ENCODE measurements at regions of chr1 and their contacts with region 1.

Region 1: DNA sequence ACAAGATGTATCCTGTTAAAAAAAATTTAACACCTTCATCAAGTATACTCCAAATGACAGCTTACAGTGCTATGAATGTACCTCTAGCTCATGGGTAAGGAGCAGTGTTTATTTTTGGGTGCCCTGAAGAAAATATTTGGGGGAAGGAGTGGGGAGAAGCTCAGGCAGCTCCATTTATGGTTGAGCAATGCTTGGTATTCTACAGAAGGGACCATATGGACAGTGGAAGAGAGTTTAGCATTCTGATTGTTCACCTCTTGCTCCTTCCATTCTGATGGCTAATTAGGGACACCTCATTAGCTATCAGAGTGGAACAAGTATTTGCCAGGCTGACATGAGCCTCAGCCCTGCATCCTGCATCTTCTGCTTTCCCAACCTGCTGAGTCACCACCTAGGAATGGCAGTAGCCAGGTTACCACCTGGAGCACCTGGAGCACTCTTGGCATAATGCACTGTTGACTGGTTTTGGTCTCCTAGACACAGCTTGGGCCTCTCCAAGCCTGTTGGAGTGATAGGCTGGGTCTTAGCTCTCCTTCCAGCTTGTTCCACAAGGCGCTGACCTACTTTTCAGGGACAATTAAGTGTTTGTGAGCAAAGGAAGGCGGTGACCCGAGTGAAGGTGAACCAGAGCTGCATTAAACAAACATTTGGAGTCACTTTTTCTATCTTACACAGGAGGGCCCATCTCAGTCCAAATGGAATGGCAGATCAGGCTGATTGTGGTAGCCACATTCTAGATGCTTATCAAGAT is 61.9 kb upstream of the MACF1 start:
- DNase-seq: no peak
- H3K4me3 ChIP-seq: no peak overlapping the region
- H3K27ac ChIP-seq: peak overlapping the region; percentile 87
- H3K27me3 ChIP-seq: no peaks in the 10 kb centered on the region
- CTCF ChIP-seq: no peak

Region 2: GRCh38 chr1:38783640-38784229 is 358.8 kb before region 1 on chr1:
- CTCF ChIA-PET with region 1: no interaction called
- POLR2A ChIA-PET with region 1: no interaction called
- DNase-seq: no peak
- H3K4me3 ChIP-seq: no peak overlapping the region
- H3K27ac ChIP-seq: no peak overlapping the region
- H3K27me3 ChIP-seq: peaks cover 17% of the 10 kb centered on the region
- CTCF ChIP-seq: no peak

Region 3: DNA sequence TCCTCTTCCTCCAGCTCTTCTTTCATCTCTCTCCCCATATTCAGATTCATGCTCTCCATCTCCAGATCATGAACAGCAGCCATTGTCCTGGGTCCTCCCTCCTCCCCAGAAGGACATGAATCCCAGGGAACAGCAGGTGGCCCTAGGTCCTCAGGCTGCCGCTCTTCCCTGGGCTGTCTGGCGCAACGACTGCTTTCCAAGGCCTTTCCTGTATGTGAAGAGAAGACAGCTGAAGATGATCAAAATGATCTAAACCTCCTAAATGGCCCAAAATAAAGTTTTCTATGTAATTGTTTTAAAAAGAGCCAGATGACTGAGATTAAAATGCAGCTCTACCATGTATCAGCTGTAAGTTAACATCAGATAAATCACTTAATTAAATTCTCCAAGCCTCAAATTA is 223.4 kb before region 1 on chr1:
- CTCF ChIA-PET with region 1: no interaction called
- POLR2A ChIA-PET with region 1: no interaction called
- DNase-seq: no peak
- H3K4me3 ChIP-seq: no peak overlapping the region
- H3K27ac ChIP-seq: no peak overlapping the region
- H3K27me3 ChIP-seq: no peaks in the 10 kb centered on the region
- CTCF ChIP-seq: no peak

Region 4: GRCh38 chr1:39034114-39034654 is 108.4 kb before region 1 on chr1:
- CTCF ChIA-PET with region 1: no interaction called
- POLR2A ChIA-PET with region 1: no interaction called
- DNase-seq: no peak
- H3K4me3 ChIP-seq: no peak overlapping the region
- H3K27ac ChIP-seq: no peak overlapping the region
- H3K27me3 ChIP-seq: no peaks in the 10 kb centered on the region
- CTCF ChIP-seq: no peak

Region 5: GRCh38 chr1:39105061-39105840 is 37.3 kb before region 1 on chr1:
- CTCF ChIA-PET with region 1: interaction called, 4 read pairs
- POLR2A ChIA-PET with region 1: interaction called, 15 read pairs
- DNase-seq: no peak
- H3K4me3 ChIP-seq: peak overlapping the region; percentile 84
- H3K27ac ChIP-seq: peak overlapping the region; percentile 84
- H3K27me3 ChIP-seq: no peaks in the 10 kb centered on the region
- CTCF ChIP-seq: no peak

Region 6: DNA sequence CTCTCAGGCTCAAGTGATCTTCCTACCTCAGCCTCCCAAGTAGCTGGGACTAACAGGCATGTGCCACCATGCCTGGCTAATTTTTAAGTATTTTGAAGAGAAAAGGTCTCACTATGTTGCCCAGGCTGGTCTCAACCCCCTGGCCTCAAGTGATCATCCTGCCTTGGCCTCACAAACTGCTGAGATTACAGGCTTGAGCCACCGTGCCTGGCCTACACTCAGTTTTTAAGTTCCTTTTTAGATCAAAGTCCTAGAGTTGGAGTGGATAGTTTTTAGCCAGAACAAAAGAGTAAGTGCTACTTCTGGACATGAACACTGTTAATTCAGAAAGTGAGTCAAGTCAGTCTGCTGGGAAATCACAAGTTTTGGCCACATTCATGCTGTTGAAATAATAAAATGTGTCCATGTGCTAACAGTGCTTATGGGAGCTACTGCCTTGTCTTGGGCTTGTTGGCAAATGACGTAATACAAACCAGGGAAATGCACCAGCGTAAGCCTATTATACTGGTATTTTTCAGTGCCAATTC is 32.2 kb before region 1 on chr1:
- CTCF ChIA-PET with region 1: interaction called, 4 read pairs
- POLR2A ChIA-PET with region 1: interaction called, 15 read pairs
- DNase-seq: no peak
- H3K4me3 ChIP-seq: no peak overlapping the region
- H3K27ac ChIP-seq: peak overlapping the region; percentile 85
- H3K27me3 ChIP-seq: no peaks in the 10 kb centered on the region
- CTCF ChIP-seq: no peak

Region 7: GRCh38 chr1:39158327-39159086 is 15.9 kb after region 1 on chr1:
- CTCF ChIA-PET with region 1: interaction called, 3 read pairs
- POLR2A ChIA-PET with region 1: interaction called, 12 read pairs
- DNase-seq: no peak
- H3K4me3 ChIP-seq: peak overlapping the region; percentile 48
- H3K27ac ChIP-seq: peak overlapping the region; percentile 74
- H3K27me3 ChIP-seq: no peaks in the 10 kb centered on the region
- CTCF ChIP-seq: peak; percentile 21; the same call in 1 of the 2 replicates

Measured in AG04450 (cell line).